Heart left ventricle (tissue), 16 donors: ENCODE measurements at regions of chrX and their contacts with region 1.

Region 1: DNA sequence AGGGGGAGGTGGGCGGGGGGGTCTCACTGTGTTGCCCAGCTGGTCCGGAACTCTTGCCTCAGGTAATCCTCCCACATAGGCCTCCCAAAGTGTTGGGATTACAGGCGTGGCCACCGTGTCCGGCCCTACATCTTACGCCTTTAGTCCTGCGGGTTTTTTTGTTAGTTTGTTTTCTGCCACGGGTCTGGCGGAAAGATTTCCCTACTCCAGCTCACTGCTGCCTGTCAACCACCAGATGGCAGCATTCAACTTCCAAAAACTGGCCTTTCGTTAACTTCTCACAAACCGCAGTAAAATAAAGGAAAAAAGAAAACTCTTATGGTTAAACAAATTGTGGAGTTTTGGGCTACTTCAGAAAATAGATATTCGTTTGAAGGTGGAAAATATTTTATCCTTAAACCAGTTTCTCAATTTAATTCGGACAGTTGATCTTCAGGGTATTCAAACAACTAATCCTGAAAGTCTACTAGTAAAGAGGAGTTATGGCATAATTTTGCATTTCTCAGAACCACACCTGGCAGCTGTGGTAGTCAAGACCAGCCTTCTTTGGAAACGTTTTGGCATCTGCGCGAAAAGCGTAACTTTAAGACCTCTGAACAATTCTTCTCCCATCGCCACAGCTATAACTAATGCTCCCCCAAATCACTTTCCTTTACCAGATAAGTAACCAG is 41.1 kb downstream of the LUZP4 start:
- DNase-seq: peak in 2 of 5 donors; percentile 18 to 30
- ATAC-seq: peak in 3 of 4 donors; percentile 39 to 69 (median 44)
- H3K4me3 ChIP-seq: peak overlapping the region in 5 of 12 donors; percentile 22 to 36 (median 33)
- H3K27ac ChIP-seq: peak overlapping the region in 1 of 12 donors; percentile 2
- H3K4me1 ChIP-seq: peaks cover 0 to 5% (median 0%) of the 10 kb centered on the region in 12 donors
- H3K27me3 ChIP-seq: peaks cover 0 to 18% (median 0%) of the 10 kb centered on the region in 9 donors
- CTCF ChIP-seq: peak; percentile 62 to 89 (median 74)
- POLR2A ChIP-seq: no peak

Region 2: DNA sequence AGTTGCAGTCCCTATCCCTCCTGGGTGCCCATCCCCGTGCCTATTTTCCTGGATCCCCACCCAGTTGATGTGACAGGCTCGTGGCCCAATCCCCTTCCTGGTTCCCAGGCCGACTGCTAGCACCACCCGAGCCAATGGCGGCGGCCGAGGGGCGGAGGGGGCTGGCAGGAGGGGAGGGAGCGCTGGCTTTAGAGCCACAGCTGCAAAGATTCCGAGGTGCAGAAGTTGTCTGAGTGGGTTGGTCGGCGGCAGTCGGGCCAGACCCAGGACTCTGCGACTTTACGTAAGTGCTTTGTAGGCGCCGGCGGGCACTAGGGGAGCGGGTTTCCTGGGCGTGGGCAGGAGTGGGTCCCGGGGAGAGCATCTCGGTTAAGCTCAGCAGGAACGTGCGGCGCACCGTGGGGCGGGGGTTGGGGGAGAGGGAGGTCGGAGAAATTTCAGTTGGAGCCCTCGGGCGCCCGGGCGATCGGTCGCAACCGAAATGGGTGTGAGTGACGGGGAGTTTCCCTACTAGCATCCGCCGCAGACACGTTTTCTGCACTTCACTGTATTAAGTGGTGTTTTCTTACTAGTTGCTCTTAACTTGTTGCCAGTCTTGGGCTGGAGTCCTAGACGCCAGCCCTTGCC is 230.5 kb after region 1 on chrX and contains the start of gene PLS3:
- intact Hi-C with region 1: loop called in 5 of 10 experiments (anchors 5 to 10 kb)
- DNase-seq: peak; percentile 88 to 92 (median 90)
- ATAC-seq: peak; percentile 91 to 94 (median 93)
- H3K4me3 ChIP-seq: peak within 1 kb of the TSS; percentile 56 to 86 (median 72)
- H3K27ac ChIP-seq: peak within 1 kb of the TSS; percentile 79 to 96 (median 91)
- H3K4me1 ChIP-seq: peaks cover 0 to 39% (median 6%) of the 10 kb centered on the region in 12 donors
- H3K27me3 ChIP-seq: peaks cover 0 to 59% (median 0%) of the 10 kb centered on the region in 9 donors
- CTCF ChIP-seq: no peak
- POLR2A ChIP-seq: peak in 1 of 2 donors; percentile 86
- total RNA-seq, gene PLS3: 33.6 to 61.8 (median 36.6) TPM

Region 3: DNA sequence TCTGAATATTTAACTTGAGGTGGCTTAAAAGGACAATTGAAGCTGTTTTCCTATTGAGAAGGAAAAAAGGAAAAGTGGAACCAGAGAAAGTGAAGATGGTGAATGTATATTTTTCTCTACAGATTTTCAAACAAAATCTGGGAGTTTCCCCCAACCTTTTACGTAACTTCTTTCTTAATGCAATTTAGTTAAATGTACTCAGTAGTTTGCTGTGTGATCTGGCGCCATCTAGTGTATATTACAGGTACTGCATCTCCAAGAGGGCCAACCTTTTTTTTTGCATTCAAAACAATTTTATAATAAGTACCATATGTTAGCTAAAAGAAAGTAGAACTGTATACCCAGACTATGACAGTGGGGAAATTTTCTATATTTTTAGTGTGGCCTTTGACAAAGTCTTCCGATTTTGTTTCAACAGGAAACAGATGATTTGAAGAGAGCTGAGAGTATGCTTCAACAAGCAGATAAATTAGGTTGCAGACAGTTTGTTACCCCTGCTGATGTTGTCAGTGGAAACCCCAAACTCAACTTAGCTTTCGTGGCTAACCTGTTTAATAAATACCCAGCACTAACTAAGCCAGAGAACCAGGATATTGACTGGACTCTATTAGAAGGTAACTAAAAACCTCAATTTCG is 312.4 kb after region 1 on chrX:
- intact Hi-C with region 1: loop called (anchors 1 to 5 kb)
- DNase-seq: peak in 1 of 5 donors; percentile 15
- ATAC-seq: no peak
- H3K4me3 ChIP-seq: no peak overlapping the region
- H3K27ac ChIP-seq: peak overlapping the region in 9 of 12 donors; percentile 2 to 59 (median 46)
- H3K4me1 ChIP-seq: peaks cover 0 to 12% (median 2%) of the 10 kb centered on the region in 12 donors
- H3K27me3 ChIP-seq: peaks cover 0 to 18% (median 0%) of the 10 kb centered on the region in 9 donors
- CTCF ChIP-seq: peak; percentile 80 to 99 (median 88)
- POLR2A ChIP-seq: no peak

Region 4: DNA sequence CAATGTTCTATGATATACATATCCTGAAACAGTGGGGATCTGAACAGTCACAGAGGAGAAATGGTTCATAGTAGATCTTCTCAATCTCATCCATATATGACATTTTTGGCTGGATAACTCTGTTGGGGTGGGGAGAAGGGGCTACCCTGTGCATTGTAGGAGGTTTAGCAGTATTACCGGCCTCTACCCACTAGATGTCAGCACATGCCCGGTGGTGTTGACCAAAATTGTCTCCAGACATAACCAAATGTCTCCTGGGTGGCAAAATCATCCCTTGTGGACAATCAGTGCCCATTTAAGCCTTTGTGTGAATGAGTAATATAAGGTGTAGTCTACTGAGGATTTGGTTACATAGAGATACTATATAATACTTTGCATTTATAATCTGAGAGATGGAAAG is 320.3 kb after region 1 on chrX:
- intact Hi-C with region 1: loop called in 1 of 10 experiments (anchors 5 kb)
- DNase-seq: peak in 1 of 5 donors; percentile 29
- ATAC-seq: peak; percentile 15 to 72 (median 60)
- H3K4me3 ChIP-seq: no peak overlapping the region
- H3K27ac ChIP-seq: peak overlapping the region in 1 of 12 donors; percentile 41
- H3K4me1 ChIP-seq: peaks cover 0 to 19% (median 6%) of the 10 kb centered on the region in 12 donors
- H3K27me3 ChIP-seq: peaks cover 0 to 33% (median 0%) of the 10 kb centered on the region in 9 donors
- CTCF ChIP-seq: peak; percentile 20 to 66 (median 46)
- POLR2A ChIP-seq: no peak

Region 5: GRCh38 chrX:115679460-115679859 is 348.8 kb after region 1 on chrX:
- intact Hi-C with region 1: loop called in 1 of 10 experiments (anchors 10 kb)
- DNase-seq: no peak
- ATAC-seq: no peak
- H3K4me3 ChIP-seq: no peak overlapping the region
- H3K27ac ChIP-seq: no peak overlapping the region
- H3K4me1 ChIP-seq: no peaks in the 10 kb centered on the region
- H3K27me3 ChIP-seq: peaks cover 0 to 11% (median 0%) of the 10 kb centered on the region in 9 donors
- CTCF ChIP-seq: peak in 11 of 12 donors; percentile 6 to 52 (median 33)
- POLR2A ChIP-seq: no peak

Region 6: DNA sequence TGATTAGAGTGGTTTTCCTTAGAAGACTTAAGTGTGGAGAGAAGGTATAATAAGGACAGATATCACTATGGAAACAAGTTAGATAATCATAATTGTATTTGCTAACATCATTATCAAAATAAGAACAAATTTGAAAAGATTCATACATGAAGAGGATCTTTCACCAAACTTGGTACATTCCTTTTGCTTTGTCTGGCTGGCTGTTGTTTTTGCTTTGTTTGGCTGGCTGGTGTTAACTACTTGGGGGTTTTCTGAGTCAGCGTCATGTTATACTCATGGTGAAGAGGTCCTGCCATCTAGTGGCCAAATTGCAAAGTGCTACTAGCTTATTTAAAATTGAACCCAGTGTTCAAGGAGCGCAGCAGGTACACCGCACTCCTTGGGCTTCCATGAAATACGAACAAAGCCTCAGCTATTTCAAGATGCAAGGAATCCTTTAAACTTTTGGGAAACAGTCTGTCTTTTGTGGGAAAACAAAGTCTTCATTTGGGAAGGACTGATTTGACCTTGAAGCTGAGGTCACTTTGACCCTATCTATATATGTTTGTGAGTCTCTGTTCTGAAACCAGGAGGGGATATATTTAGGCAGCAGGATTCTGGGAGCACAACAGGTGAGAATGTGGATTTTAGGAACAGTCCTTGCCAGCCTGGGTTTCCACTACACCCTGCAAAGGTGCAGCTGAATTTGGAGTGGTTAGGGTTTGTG is 360.0 kb after region 1 on chrX:
- intact Hi-C with region 1: loop called in 8 of 10 experiments (anchors 2 to 5 kb)
- DNase-seq: peak in 4 of 5 donors; percentile 20 to 47 (median 28)
- ATAC-seq: peak in 3 of 4 donors; percentile 69 to 81 (median 74)
- H3K4me3 ChIP-seq: peak overlapping the region in 1 of 12 donors; percentile 18
- H3K27ac ChIP-seq: peak overlapping the region in 6 of 12 donors; percentile 24 to 70 (median 48)
- H3K4me1 ChIP-seq: peaks cover 0 to 5% (median 0%) of the 10 kb centered on the region in 12 donors
- H3K27me3 ChIP-seq: peaks cover 0 to 22% (median 0%) of the 10 kb centered on the region in 9 donors
- CTCF ChIP-seq: peak; percentile 54 to 89 (median 69)
- POLR2A ChIP-seq: no peak